Right ventricle myocardium superior (tissue), 1 donor: ENCODE measurements at regions of chr7 and their contacts with region 1.

Region 1: GRCh38 chr7:30412810-30413504 is 65.6 kb downstream of the NOD1 start:
- DNase-seq: no peak
- ATAC-seq: peak; percentile 94

Region 2: DNA sequence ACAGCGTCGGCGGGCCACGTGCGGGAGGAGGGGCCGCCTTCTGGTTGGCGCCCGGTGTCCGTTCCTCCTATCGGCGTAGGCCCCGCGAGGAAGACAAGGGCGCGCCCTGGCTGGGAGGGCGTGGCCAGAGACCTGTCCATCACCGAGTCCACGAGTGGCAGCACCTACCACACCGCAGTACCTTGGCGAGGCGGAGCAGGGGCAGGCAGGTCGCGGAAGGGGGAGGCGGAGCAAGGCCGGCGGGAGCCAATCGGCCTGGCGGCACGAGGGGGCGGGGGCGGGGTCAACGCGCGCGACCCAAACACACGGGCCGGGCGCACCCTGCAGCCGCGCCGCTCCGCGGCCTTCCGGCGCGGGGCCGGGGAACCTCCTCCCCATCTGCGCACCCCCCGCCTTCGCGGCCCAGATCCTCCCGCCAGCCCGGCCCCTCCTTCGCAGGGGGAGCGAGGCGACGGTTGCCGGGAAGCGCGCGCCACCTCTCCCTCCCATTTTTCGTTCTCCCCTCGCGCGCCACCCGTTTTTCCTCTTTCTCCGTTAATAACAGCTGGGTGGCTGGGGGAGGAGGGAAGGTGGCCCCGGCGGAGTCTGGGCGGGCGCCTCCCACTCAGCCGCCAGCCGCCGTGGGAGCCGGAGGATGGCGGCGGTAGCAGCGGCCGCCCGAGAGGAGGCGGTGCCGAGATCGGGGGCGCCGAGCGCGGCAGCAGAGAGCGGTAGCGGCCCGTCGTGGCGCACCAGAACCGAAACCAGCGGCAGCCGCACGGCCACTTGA is 128.5 kb before region 1 on chr7 and contains the start of gene ZNRF2:
- intact Hi-C with region 1: loop called (anchors 5 kb)
- DNase-seq: peak; percentile 99
- ATAC-seq: peak; percentile 94
- total RNA-seq, gene ZNRF2: 7.2 TPM

Region 3: GRCh38 chr7:30469303-30469702 is 56.3 kb after region 1 on chr7:
- intact Hi-C with region 1: no loop called
- DNase-seq: peak; percentile 87
- ATAC-seq: peak; percentile 72